BJ (cell line): ENCODE measurements at regions of chr1 and their contacts with region 1.

Region 1: GRCh38 chr1:22930235-22930912 is 42.3 kb downstream of the LACTBL1 start:
- DNase-seq: no peak
- H3K4me3 ChIP-seq: no peak overlapping the region
- H3K27me3 ChIP-seq: peaks cover 11% of the 10 kb centered on the region
- CTCF ChIP-seq: peak; percentile 91

Region 2: GRCh38 chr1:22539510-22540118 is 390.8 kb before region 1 on chr1:
- CTCF ChIA-PET with region 1: no interaction called
- POLR2A ChIA-PET with region 1: interaction called, 13 read pairs
- DNase-seq: no peak
- H3K4me3 ChIP-seq: no peak overlapping the region
- H3K27me3 ChIP-seq: no peaks in the 10 kb centered on the region; the same call in 1 of the 2 replicates
- CTCF ChIP-seq: no peak

Region 3: DNA sequence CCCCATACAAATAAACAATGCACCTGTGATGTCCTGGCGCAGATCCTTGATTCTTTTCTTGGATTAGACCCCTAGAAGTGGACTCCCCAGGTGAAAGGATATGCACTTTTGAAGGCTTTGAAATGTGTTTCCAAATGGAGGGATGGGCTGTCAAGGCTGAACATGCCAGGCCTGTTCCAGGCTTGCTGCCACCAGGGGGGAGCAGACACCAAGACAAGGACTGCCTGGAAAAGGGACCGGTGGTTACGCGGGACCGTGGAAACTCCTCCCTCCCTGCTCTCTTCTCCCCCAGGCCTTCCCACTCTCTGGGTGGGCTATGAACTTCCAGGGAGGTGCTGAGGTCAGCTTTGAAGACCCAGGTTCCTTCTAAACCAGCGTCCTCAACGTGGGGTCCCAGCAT is 264.6 kb before region 1 on chr1:
- CTCF ChIA-PET with region 1: interaction called, 121 read pairs
- POLR2A ChIA-PET with region 1: no interaction called
- DNase-seq: no peak
- H3K4me3 ChIP-seq: no peak overlapping the region
- H3K27me3 ChIP-seq: peaks cover 14% of the 10 kb centered on the region
- CTCF ChIP-seq: peak; percentile 57

Region 4: GRCh38 chr1:22673486-22674409 is 256.6 kb before region 1 on chr1:
- CTCF ChIA-PET with region 1: interaction called, 121 read pairs
- POLR2A ChIA-PET with region 1: interaction called, 3 read pairs
- DNase-seq: no peak
- H3K4me3 ChIP-seq: no peak overlapping the region
- H3K27me3 ChIP-seq: peaks cover 28% of the 10 kb centered on the region
- CTCF ChIP-seq: peak; percentile 79

Region 5: GRCh38 chr1:22790232-22791008 is 140.0 kb before region 1 on chr1:
- CTCF ChIA-PET with region 1: no interaction called
- POLR2A ChIA-PET with region 1: no interaction called
- DNase-seq: no peak
- H3K4me3 ChIP-seq: no peak overlapping the region
- H3K27me3 ChIP-seq: no peaks in the 10 kb centered on the region
- CTCF ChIP-seq: no peak

Region 6: DNA sequence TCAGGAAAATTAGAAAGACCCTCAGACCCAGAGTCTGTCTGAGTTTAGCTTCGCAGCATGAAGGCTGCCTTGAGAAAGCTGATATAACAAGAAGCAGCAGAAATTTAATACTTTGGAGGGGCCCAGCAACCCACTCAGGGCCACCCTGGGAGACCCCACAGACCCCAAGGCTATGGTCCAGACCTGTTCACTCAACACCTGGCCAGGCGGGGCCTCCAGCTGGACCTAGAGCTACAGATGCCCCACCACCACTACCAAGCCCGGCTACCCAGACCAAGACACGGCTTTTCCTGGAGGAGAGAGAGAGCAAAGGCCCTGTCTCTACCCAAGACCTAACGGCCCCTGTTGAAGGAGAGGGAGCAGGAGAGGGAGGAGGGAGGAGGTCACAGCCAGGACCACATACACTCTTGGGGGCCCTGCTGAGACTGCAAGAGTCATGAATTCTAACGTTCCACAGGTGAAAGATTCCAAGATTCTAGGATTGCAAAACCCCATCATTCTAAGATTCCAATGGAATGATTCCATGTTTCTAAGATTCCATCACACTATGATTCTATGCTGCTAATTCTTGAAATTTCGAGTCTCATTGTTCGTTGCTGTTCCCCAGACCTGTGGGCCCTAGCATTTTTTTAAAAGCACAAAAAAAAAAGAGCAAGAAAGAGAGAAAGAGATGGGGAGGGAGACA is 10.9 kb before region 1 on chr1:
- CTCF ChIA-PET with region 1: interaction called, 20 read pairs
- POLR2A ChIA-PET with region 1: no interaction called
- DNase-seq: no peak
- H3K4me3 ChIP-seq: no peak overlapping the region
- H3K27me3 ChIP-seq: no peaks in the 10 kb centered on the region; the same call in 1 of the 2 replicates
- CTCF ChIP-seq: no peak

Region 7: DNA sequence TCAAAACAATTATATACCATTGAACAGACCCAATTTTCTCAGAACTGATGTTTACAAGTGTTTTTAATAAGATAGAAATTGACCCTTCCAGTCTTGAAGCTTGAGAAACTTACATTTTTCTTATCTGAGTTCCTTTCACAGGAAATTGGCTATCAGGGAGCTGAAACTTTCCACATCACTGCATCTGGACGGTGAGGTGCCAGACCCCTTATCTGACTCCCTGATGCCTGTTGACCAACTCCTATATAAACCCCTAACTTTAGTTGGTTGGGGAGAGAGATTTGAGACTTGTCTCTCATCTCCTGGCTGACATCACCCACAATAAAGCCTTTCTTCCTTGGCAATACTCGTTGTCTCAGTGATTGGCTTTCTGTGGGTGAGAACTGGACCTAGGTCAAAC is 10.9 kb after region 1 on chr1:
- CTCF ChIA-PET with region 1: interaction called, 14 read pairs
- POLR2A ChIA-PET with region 1: no interaction called
- DNase-seq: no peak
- H3K4me3 ChIP-seq: no peak overlapping the region
- H3K27me3 ChIP-seq: peaks cover 9% of the 10 kb centered on the region
- CTCF ChIP-seq: no peak

Region 8: GRCh38 chr1:23118957-23119792 is 188.8 kb after region 1 on chr1:
- CTCF ChIA-PET with region 1: no interaction called
- POLR2A ChIA-PET with region 1: no interaction called
- DNase-seq: no peak
- H3K4me3 ChIP-seq: no peak overlapping the region
- H3K27me3 ChIP-seq: no peaks in the 10 kb centered on the region
- CTCF ChIP-seq: no peak